ENCODE measurements at regions of chr5 and their contacts with region 1.

Region 1: DNA sequence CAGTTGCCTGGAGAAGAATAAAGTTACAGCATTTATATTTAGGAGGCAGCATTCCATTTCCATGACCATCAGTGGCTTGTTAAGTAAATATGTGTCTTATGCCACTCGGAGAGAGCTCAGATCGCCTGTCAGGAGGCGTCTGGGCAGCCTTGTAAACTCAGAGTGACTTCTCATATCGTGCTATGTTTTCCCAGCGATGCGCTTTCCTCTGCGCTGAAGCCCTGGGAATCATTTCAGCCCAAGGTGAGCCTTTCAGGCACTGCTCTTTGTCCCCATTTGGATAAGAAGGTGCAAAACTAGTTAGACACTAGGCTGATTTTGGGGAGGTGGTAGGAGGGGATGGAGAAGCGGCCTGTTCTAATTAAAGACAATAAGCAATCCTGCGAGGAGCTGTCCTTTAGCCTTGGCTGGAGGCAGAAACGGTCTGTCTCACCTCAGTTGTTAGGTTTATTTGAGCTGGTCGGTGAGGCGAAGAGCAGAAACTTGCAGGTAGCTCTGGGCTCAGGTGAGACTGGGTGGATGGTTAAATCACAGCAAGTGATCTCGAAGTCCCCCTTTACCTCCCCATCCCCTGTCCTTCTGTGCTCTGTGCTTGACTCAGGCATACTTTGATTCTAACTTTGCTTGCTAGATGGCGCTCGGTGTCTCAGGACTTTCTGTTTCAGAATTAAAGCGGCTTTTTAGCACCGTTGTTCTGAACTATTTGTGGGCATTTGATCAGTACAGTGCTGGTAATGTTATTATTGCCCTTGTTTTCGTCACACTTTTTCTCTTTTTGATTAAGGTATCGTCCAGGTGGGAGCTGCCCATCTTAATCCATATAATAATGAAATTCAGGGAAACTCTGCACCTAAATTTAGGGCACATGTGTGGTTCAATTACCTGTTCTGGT is 24.6 kb downstream of the NR2F1 start:
- DNase-seq: no peak
- ATAC-seq: peak; percentile 86
- H3K4me3 ChIP-seq: peak overlapping the region; percentile 30 to 68
- H3K27ac ChIP-seq: peak overlapping the region; percentile 39
- H3K4me1 ChIP-seq: peaks cover 13% of the 10 kb centered on the region
- H3K27me3 ChIP-seq: peaks cover 35% of the 10 kb centered on the region
- CTCF ChIP-seq: peak; percentile 86

Region 2: DNA sequence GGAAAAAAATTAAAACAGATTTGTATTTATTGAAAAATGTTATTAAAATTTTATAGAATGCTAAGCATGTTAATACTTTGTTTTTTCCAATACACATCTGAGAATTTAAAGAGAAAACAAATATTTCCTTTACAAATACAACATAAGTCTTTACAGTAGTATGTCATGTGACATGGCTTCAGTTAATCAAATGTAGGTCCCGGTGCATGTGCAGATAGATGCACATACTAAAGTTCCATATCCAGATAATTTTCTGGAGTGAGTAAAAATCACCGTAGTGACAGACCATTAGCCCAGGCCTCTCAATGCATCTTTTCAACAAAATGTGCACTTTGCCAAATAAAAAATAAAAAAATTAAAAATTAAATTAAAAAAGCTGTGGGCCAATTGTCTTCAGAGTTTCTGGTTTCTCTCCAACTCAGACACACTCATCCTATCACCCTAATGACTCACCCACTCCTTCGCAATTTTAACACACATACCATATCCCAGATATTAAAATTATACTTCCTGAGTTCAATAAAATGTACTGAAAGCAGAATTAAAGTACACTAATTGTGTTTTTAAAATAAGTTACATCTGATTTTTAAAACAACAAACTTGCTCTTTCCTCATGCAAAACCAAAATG is 534.7 kb before region 1 on chr5:
- CTCF ChIA-PET with region 1: no interaction called
- POLR2A ChIA-PET with region 1: no interaction called
- in situ Hi-C with region 1: no loop called
- intact Hi-C with region 1: no loop called
- DNase-seq: no peak
- ATAC-seq: no peak
- H3K4me3 ChIP-seq: no peak overlapping the region
- H3K27ac ChIP-seq: peak overlapping the region; percentile 37; the same call in 1 of the 2 replicates
- H3K4me1 ChIP-seq: peaks cover 4% of the 10 kb centered on the region; the same call in 1 of the 2 replicates
- H3K27me3 ChIP-seq: no peaks in the 10 kb centered on the region
- CTCF ChIP-seq: no peak

Region 3: DNA sequence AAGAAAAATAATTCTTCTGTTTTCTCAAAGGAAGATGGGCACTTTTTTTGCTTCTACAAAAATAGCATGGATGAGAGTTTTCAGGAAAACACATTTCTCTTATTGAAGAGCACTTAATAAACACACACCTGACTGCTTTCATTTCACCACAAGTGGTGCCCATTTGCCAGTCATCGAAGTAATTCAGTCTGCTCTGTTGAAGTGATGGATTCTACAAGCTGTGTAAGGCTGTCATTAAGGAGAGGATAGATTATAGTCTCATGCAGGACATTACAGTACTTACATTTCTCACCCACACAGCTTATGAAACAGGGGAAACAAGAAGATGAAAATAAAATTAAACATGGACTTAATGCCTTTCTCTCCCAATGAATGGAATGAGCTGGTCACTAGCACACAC is 191.8 kb before region 1 on chr5:
- CTCF ChIA-PET with region 1: no interaction called
- POLR2A ChIA-PET with region 1: no interaction called
- in situ Hi-C with region 1: no loop called
- intact Hi-C with region 1: no loop called
- DNase-seq: no peak
- ATAC-seq: no peak
- H3K4me3 ChIP-seq: no peak overlapping the region
- H3K27ac ChIP-seq: no peak overlapping the region; the same call in 1 of the 2 replicates
- H3K4me1 ChIP-seq: peaks cover 7% of the 10 kb centered on the region; the same call in 1 of the 2 replicates
- H3K27me3 ChIP-seq: no peaks in the 10 kb centered on the region
- CTCF ChIP-seq: no peak

Region 4: GRCh38 chr5:93545872-93546271 is 61.7 kb before region 1 on chr5:
- CTCF ChIA-PET with region 1: no interaction called
- POLR2A ChIA-PET with region 1: no interaction called
- in situ Hi-C with region 1: no loop called
- intact Hi-C with region 1: no loop called
- DNase-seq: no peak
- ATAC-seq: no peak
- H3K4me3 ChIP-seq: no peak overlapping the region
- H3K27ac ChIP-seq: no peak overlapping the region
- H3K4me1 ChIP-seq: no peaks in the 10 kb centered on the region
- H3K27me3 ChIP-seq: no peaks in the 10 kb centered on the region
- CTCF ChIP-seq: no peak

Region 5: DNA sequence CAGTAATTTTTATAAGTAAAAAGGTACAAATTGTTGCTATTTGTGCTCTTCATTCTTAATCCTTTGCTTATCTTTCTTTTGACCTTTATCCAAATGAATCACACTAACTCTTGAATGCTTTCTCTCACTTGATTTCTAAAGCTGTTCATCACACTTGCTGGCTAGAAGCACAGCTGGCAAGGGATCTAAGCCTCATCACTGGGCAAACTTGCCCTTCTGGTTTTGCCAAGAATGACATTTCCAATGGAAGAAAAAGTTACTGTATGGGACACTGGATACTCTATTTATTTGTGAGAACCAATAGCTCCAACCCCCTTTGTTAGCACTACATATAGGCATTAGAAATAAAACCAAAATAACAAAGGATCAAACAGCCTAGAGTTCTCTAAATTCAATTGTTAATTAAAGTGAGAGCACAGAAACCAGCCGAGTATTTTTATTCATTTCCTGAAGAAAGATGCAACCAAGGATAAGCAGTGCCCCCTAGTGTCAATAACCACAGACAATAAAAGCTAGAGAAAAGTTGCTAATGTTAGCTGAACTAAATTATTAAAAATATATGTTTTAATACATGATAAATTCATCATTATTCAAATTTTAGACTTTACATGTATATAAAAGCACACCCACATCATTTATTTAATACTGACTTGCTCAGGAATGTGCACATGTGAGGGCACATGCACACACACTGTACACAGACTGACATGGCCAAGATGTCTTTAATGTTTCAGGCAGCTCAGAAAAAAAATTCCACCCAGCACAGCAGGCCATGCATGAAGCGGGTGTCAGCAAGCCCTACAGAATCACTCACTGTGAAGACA is 193.6 kb after region 1 on chr5:
- CTCF ChIA-PET with region 1: interaction called, 9 read pairs
- POLR2A ChIA-PET with region 1: no interaction called
- in situ Hi-C with region 1: loop called (anchors 25 kb)
- intact Hi-C with region 1: loop called (anchors 5 kb)
- DNase-seq: peak; percentile 24
- ATAC-seq: peak; percentile 73
- H3K4me3 ChIP-seq: no peak overlapping the region
- H3K27ac ChIP-seq: peak overlapping the region; percentile 63; the same call in 1 of the 2 replicates
- H3K4me1 ChIP-seq: peaks cover 9% of the 10 kb centered on the region
- H3K27me3 ChIP-seq: no peaks in the 10 kb centered on the region
- CTCF ChIP-seq: peak; percentile 76

Region 6: GRCh38 chr5:93915142-93915553 is 307.5 kb after region 1 on chr5:
- CTCF ChIA-PET with region 1: no interaction called
- POLR2A ChIA-PET with region 1: no interaction called
- in situ Hi-C with region 1: no loop called
- intact Hi-C with region 1: loop called (anchors 10 kb)
- DNase-seq: peak; percentile 30
- ATAC-seq: no peak
- H3K4me3 ChIP-seq: no peak overlapping the region
- H3K27ac ChIP-seq: no peak overlapping the region
- H3K4me1 ChIP-seq: no peaks in the 10 kb centered on the region
- H3K27me3 ChIP-seq: no peaks in the 10 kb centered on the region
- CTCF ChIP-seq: peak; percentile 67; the same call in 1 of the 2 replicates

Measured in Panc1 (cell line).